ENCODE measurements at regions of chr2 and their contacts with region 1.

Region 1: DNA sequence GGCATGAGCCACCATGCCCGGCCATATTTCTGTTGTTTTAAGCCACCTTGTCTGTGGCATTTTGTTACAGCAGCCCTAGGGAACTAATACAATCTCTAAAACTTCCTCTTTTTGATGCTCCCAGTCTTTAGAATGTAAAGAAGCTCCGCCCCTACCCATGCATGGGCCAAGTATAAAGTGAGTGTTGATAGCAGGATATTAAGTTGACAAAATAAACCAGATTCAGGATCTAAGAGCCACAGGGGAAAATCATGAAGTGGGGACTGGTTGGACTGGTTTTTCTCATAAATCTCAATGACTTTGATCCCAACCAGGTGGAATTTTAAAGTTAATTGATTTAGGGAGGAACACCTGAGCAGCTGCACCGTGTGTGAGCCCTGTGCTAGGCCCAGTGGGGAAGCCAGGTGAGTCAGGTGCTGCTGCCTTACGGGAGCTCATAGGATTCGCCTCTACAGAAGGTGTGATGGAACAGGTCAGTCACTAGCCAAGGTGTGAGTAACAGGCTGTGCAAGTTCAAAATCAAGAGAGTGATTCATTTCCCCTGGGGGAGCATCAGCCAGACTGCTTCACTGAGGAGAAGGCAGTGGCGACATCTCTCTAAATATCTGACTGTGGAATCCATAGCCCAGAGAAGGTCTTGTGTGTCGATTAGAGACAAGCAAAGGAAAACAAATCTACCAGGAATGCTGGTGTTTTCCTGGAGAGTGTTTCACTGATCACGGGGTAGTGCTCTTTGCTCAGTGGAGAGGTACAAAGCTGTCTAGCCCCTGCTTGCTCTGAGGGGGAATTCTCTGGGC is 63.0 kb upstream of the MSH2 start:
- DNase-seq: peak; percentile 92
- ATAC-seq: peak; percentile 84
- H3K4me3 ChIP-seq: peak overlapping the region in 1 of 2 experiments; percentile 27; a peak in 2 of 4 replicates
- H3K27ac ChIP-seq: peak overlapping the region; percentile 84
- H3K4me1 ChIP-seq: peaks cover 34 to 66% of the 10 kb centered on the region in 2 experiments
- H3K27me3 ChIP-seq: no peaks in the 10 kb centered on the region
- CTCF ChIP-seq: no peak
- POLR2A ChIP-seq: no peak
- RAD21 ChIP-seq: peak; percentile 26; the same call in 1 of the 2 replicates

Region 2: DNA sequence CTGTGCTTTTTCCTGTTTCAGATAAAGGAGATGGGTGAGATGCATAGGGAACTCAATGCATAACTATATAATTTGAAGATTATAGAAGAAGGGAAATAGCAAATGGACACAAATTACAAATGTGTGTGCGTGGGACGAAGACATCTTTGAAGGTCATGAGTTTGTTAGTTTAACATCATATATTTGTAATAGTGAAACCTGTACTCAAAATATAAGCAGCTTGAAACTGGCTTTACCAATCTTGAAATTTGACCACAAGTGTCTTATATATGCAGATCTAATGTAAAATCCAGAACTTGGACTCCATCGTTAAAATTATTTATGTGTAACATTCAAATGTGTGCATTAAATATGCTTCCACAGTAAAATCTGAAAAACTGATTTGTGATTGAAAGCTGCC is 46.6 kb after region 1 on chr2:
- CTCF ChIA-PET with region 1: interaction called, 134 read pairs
- POLR2A ChIA-PET with region 1: interaction called, 7 read pairs
- RAD21 ChIA-PET with region 1: interaction called, 26 to 53 read pairs
- intact Hi-C with region 1: loop called (anchors 1 kb)
- DNase-seq: no peak
- ATAC-seq: no peak
- H3K4me3 ChIP-seq: no peak overlapping the region
- H3K27ac ChIP-seq: no peak overlapping the region
- H3K4me1 ChIP-seq: no peaks in the 10 kb centered on the region
- H3K27me3 ChIP-seq: no peaks in the 10 kb centered on the region
- CTCF ChIP-seq: no peak
- POLR2A ChIP-seq: no peak
- RAD21 ChIP-seq: no peak

Region 3: GRCh38 chr2:47402805-47403608 is 63.1 kb after region 1 on chr2 and contains the start of gene MSH2:
- CTCF ChIA-PET with region 1: interaction called, 11 read pairs
- POLR2A ChIA-PET with region 1: interaction called, 3 read pairs
- RAD21 ChIA-PET with region 1: no interaction called
- intact Hi-C with region 1: loop called (anchors 5 kb)
- DNase-seq: peak; percentile 80
- ATAC-seq: peak; percentile 92
- H3K4me3 ChIP-seq: peak within 1 kb of the TSS; percentile 80 to 86
- H3K27ac ChIP-seq: peak within 1 kb of the TSS; percentile 76
- H3K4me1 ChIP-seq: peaks cover 13 to 25% of the 10 kb centered on the region in 2 experiments; a peak in 3 of 4 replicates
- H3K27me3 ChIP-seq: no peaks in the 10 kb centered on the region
- CTCF ChIP-seq: no peak
- POLR2A ChIP-seq: peak; percentile 59
- RAD21 ChIP-seq: no peak
- total RNA-seq, gene MSH2: 54.9 TPM

Region 4: DNA sequence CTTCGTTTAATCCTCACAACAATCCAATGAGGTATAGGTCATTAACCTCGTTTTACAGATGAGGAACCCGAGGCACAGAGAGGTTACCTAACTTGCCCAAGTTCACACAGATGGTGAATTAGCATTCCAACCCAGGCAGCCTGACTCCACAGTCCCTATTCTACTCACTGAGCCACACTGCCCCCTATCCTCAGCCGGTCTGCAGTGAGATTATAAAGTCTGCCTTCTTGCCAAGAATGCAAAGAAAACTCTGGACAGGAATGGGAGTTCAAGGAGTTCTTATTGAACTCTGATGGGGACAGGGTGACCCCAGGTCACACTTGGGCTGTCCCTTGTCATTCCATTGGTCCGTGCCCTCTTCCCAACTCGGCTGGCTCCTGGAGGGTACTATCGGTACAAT is 324.9 kb after region 1 on chr2:
- CTCF ChIA-PET with region 1: no interaction called
- POLR2A ChIA-PET with region 1: no interaction called
- RAD21 ChIA-PET with region 1: no interaction called
- intact Hi-C with region 1: loop called (anchors 10 kb)
- DNase-seq: no peak
- ATAC-seq: peak; percentile 79
- H3K4me3 ChIP-seq: no peak overlapping the region
- H3K27ac ChIP-seq: no peak overlapping the region
- H3K4me1 ChIP-seq: no peaks in the 10 kb centered on the region
- H3K27me3 ChIP-seq: no peaks in the 10 kb centered on the region
- CTCF ChIP-seq: peak in 2 of 3 experiments; percentile 24 to 42; a peak in 4 of 6 replicates
- POLR2A ChIP-seq: no peak
- RAD21 ChIP-seq: peak; percentile 65

Measured in HCT116 (cell line).